Calu3 (cell line): ENCODE measurements at regions of chr10 and their contacts with region 1.

Region 1: GRCh38 chr10:11823122-11823988 is at the start of gene PROSER2:
- DNase-seq: peak; percentile 77
- H3K4me3 Mint-ChIP-seq: peak within 1 kb of the TSS; percentile 83
- H3K27ac Mint-ChIP-seq: peak within 1 kb of the TSS; percentile 53
- H3K4me1 Mint-ChIP-seq: peaks cover 50% of the 10 kb centered on the region
- H3K27me3 Mint-ChIP-seq: no peaks in the 10 kb centered on the region
- CTCF ChIP-seq: no peak
- total RNA-seq, gene PROSER2: 18.8 and 19.5 TPM in 2 replicates

Region 2: GRCh38 chr10:11793762-11794479 is 29.4 kb before region 1 on chr10:
- CTCF ChIA-PET with region 1: interaction called, 12 read pairs
- intact Hi-C with region 1: no loop called
- DNase-seq: peak; percentile 43
- H3K4me3 Mint-ChIP-seq: no peak overlapping the region
- H3K27ac Mint-ChIP-seq: no peak overlapping the region
- H3K4me1 Mint-ChIP-seq: peaks cover 17% of the 10 kb centered on the region
- H3K27me3 Mint-ChIP-seq: peaks cover 28% of the 10 kb centered on the region
- CTCF ChIP-seq: no peak